Ascending aorta (tissue), 2 donors: ENCODE measurements at regions of chr1 and their contacts with region 1.

Region 1: GRCh38 chr1:51644533-51645197 is 27.8 kb downstream of the OSBPL9 start:
- DNase-seq: peak in 1 of 2 donors; percentile 77
- H3K4me3 ChIP-seq: no peak overlapping the region
- H3K27ac ChIP-seq: peak overlapping the region; percentile 85 to 88
- H3K4me1 ChIP-seq: peaks cover 21 to 56% of the 10 kb centered on the region in 2 donors
- H3K27me3 ChIP-seq: no peaks in the 10 kb centered on the region
- CTCF ChIP-seq: no peak

Region 2: DNA sequence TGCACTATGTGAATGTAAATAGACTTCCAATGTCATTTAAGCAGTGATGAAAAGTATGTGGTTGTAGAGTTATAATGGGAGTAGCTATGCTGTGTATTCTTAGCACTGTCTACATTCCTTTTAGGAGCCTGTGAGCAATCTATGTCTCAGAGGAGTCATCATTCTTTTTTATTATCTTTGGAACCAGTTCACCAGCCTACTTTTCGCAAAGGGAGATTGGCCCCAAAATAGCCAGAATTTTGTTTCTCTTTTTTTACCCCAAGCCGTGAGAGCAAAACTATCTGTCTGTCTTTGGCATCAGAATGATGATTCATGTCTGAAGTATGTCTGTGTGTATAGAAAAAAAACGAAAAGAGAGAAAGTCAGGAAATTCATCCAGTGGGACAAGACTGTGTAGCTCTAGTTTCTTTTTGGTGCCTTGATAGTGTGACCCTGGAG is 16.4 kb after region 1 on chr1:
- intact Hi-C with region 1: loop called (anchors 2 kb)
- DNase-seq: no peak
- H3K4me3 ChIP-seq: peak overlapping the region in 1 of 2 donors; percentile 19
- H3K27ac ChIP-seq: peak overlapping the region; percentile 80 to 83
- H3K4me1 ChIP-seq: peaks cover 4 to 63% of the 10 kb centered on the region in 2 donors
- H3K27me3 ChIP-seq: no peaks in the 10 kb centered on the region
- CTCF ChIP-seq: no peak